ENCODE measurements at regions of chr2 and their contacts with region 1.

Region 1: DNA sequence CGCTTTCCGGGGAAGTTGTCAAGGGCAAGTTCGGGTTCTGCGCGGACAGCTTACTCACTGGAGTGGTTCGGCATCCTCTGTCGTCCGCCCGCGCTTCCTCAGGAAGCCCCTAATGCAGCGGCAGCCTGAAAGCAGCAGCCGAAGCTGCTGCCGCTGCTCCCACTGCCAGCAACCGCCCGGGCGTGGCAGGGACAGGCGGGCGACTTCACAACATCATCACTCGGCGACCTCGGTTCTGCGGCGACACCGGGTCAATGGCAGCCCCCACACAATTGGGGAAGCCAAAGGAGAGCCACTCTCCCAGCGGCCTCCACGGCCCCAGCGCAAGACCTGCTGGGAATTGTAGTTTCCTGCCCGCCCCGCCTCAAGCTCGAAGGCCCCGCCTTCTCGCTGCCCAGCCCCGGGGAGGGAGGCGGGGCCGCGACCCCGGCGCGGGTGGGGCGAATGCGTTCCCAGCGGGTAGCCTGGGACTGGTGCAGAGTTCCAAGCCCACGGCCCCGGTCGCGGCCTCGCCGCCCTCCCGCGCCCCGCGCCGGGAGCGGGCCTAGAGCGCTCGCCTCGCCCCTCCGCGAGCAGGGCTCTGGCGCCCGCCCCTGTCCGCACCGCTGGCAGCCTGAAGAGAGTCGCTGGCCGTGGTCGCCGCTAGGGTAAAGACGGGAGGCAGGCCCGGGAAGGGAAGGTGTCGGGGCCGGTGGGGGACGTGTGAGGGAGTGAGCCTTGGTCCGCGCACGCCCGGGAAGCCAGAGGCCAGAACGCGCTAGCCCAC is at the starts of genes STRADB and TRAK2:
- DNase-seq: peak; percentile 96 to 98 (median 97)
- ATAC-seq: peak; percentile 97 to 99 (median 98)
- H3K4me3 ChIP-seq: peak within 1 kb of the TSS; percentile 72 to 97 (median 86)
- H3K27ac ChIP-seq: peak within 1 kb of the TSS; percentile 85 to 98 (median 92)
- H3K4me1 ChIP-seq: peaks cover 0 to 62% (median 43%) of the 10 kb centered on the region in 12 donors
- H3K27me3 ChIP-seq: no peaks in the 10 kb centered on the region
- CTCF ChIP-seq: peak in 7 of 12 donors; percentile 21 to 51 (median 42)
- POLR2A ChIP-seq: peak; percentile 41 to 88
- total RNA-seq, gene STRADB: 45.0 to 105 (median 57.9) TPM
- total RNA-seq, gene TRAK2: 110 to 201 (median 146) TPM

Region 2: DNA sequence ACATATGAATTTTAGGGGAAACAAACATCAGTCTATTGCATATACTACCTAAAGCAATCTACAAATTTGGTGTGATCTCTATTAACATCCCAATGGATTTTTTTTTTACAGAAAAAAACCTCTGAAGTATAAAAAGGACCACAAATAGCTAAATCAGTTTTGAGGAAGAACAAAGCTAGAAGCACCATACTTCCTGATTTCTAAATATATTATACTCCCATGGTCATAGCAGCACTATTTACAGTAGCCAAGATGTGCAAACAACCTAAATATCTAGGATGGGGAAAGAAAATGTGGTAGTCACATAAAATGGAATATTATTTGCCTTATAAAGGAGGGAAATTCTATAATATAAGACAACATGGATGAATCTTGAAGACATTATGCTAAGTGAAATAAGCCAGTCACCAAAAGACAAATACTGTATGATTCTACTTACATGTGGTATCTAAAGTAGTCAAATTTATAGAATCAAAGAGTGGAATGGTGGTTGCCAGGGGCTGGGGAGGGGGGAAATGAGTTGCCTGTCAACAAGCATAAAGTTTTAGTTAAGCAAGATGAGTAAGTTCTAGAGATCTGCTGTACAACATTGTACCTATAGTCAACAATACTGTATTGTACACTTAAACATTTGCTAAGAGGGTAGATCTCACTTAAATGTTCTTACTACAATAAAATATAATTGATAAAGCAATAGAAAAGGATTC is 208.8 kb before region 1 on chr2:
- intact Hi-C with region 1: loop called in 2 of 10 experiments (anchors 10 kb)
- DNase-seq: no peak
- ATAC-seq: no peak
- H3K4me3 ChIP-seq: no peak overlapping the region
- H3K27ac ChIP-seq: no peak overlapping the region
- H3K4me1 ChIP-seq: peaks cover 0 to 42% (median 0%) of the 10 kb centered on the region in 12 donors
- H3K27me3 ChIP-seq: no peaks in the 10 kb centered on the region
- CTCF ChIP-seq: no peak
- POLR2A ChIP-seq: no peak

Region 3: DNA sequence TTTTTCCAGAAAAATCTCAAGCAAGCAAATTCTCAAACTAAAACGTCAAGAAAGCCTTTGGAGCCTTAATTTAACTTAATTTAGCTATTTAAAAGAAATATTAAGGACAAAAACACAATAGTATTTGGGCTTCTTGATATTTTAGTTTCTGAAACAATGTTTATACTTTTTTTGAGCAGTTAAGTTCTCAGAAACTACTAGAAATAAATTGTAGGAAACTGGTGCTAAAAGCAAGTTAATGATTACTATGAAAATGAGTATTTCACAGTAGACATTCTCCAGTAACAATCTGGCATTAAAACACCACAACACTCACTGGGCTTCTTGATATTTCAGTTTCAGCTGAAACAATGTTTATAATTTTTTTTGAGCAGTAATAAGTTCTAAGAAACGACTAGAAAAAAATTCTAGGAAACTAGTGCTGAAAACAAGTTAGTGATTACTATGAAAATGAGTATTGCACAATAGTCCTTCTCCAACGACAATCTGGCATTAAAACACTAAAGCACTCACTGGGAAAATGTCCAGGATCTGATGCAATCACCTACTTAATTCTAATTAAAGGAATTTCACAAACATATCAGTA is 45.3 kb before region 1 on chr2:
- intact Hi-C with region 1: loop called in 8 of 10 experiments (anchors 2 to 10 kb)
- DNase-seq: peak in 1 of 5 donors; percentile 37
- ATAC-seq: peak in 3 of 4 donors; percentile 13 to 61 (median 38)
- H3K4me3 ChIP-seq: peak overlapping the region in 11 of 12 donors; percentile 9 to 51 (median 27)
- H3K27ac ChIP-seq: peak overlapping the region; percentile 53 to 80 (median 72)
- H3K4me1 ChIP-seq: peaks cover 2 to 73% (median 54%) of the 10 kb centered on the region in 12 donors
- H3K27me3 ChIP-seq: no peaks in the 10 kb centered on the region
- CTCF ChIP-seq: no peak
- POLR2A ChIP-seq: no peak

Region 4: DNA sequence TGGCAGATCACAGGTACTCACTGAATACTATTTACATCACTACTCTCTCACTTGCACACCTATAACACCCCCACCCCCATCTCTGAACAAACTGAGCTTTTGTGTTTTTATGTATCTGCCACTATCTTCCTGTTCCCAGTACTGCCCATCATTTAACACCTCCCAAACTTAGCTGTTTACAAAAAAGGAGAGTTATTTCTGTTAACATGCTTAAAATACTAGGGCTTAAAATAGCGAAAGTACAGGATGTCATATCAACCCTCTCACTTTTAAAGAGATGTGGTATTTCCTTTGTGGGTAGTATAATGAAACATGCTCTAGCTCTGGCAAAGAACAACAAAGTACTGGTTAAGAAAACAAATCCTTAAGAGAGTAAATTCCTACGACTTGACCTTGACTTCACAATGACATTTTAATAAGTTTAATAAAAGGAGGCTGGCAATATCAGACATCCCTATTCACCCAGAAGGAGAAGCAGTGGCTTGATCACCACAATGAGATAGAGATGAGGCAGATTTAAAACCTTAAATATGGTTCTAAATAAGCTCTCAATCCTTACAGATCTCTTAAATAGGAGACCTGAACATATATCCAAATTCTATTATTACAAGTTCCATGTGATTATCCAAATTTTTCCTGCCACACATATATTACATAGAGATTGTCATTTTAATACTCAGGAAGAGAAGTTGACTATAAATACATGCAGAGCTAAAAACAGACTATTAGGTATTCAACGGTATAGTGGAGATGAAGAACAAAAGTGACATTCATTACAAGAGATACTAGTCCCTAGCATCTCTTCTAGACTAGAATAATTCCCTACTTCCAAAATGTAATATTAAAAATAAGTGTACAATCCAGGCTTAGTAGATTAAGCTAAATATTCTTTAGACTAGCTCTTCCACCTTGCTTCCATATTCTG is 37.1 kb before region 1 on chr2:
- intact Hi-C with region 1: loop called in 7 of 10 experiments (anchors 1 to 10 kb)
- DNase-seq: no peak
- ATAC-seq: peak; percentile 79 to 89 (median 84)
- H3K4me3 ChIP-seq: peak overlapping the region in 8 of 12 donors; percentile 5 to 26 (median 10)
- H3K27ac ChIP-seq: peak overlapping the region; percentile 30 to 93 (median 78)
- H3K4me1 ChIP-seq: peaks cover 0 to 76% (median 58%) of the 10 kb centered on the region in 12 donors
- H3K27me3 ChIP-seq: no peaks in the 10 kb centered on the region
- CTCF ChIP-seq: no peak
- POLR2A ChIP-seq: peak in 1 of 2 donors; percentile 40

Region 5: DNA sequence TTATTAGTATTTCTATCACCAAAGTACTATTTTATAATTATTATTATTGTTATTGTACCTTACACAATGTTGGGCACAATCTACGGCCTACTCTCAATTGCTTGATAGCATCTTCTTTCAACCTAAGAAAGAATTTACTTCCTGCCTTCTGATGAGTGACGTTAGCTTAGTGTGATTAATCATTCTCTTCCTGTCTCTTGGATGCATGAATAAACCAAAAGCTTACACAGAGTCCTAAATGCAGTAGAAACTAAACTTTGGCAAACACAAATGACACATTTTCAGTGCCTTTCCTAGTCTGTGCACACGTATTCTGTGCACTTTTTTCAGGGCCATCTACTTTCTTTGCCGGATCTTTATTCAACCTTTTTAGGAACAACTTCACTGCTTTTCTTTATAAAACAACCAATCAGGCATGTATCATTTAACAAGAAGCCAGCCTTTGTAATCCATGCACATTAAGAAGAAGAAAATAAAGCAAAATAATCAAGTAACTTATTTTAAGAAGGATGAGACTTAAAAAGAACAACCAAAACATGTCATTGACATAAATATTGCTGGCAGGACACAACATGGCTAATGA is 19.3 kb before region 1 on chr2:
- intact Hi-C with region 1: loop called in 2 of 10 experiments (anchors 2 kb)
- DNase-seq: no peak
- ATAC-seq: peak in 3 of 4 donors; percentile 57 to 74 (median 73)
- H3K4me3 ChIP-seq: peak overlapping the region in 3 of 12 donors; percentile 3 to 23 (median 13)
- H3K27ac ChIP-seq: peak overlapping the region; percentile 37 to 91 (median 80)
- H3K4me1 ChIP-seq: peaks cover 2 to 68% (median 46%) of the 10 kb centered on the region in 12 donors
- H3K27me3 ChIP-seq: no peaks in the 10 kb centered on the region
- CTCF ChIP-seq: no peak
- POLR2A ChIP-seq: no peak